PC-9 (cell line): ENCODE measurements at regions of chr2 and their contacts with region 1.

Region 1: DNA sequence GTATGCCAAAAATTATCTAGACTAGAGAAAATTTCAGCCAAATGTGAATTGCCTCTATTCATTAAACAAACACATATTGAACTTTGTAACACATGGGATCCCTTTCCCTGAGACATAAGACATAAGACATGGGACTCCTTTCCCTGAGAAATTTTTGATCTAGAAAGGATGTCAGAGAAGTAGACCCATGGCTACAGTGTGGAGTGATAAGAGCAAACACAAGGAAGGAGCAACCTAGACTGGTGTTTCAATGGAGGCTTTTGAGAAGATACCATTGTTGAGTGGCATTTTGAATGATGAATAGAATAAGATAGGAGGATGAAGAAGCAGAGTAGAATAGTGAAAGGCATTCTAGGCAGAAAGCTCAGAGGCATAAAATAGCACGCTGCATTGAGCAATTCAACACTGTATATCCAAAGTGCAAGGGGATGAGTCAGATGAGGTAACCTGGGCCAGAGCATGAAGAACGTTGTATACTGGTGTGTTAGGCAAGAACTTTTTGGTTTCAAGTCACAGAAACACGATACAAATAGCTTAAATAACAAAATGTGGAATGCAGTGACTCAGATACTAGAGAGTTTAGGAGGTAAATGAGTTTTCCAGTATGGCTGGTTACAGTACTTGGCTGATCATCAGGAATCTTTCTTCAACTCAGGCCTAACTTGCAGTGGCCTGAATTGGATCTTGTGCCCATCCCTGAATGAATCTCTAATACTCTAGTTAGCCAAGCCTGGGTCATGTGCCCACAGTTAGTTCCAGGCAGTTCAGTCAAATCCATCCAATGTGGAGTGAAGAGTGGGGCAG is 129.8 kb upstream of the TANK start:
- DNase-seq: peak; percentile 43 to 93
- H3K4me3 ChIP-seq: no peak overlapping the region
- H3K27ac ChIP-seq: peak overlapping the region; percentile 73
- H3K4me1 ChIP-seq: peaks cover 20% of the 10 kb centered on the region
- H3K27me3 ChIP-seq: no peaks in the 10 kb centered on the region
- CTCF ChIP-seq: no peak

Region 2: DNA sequence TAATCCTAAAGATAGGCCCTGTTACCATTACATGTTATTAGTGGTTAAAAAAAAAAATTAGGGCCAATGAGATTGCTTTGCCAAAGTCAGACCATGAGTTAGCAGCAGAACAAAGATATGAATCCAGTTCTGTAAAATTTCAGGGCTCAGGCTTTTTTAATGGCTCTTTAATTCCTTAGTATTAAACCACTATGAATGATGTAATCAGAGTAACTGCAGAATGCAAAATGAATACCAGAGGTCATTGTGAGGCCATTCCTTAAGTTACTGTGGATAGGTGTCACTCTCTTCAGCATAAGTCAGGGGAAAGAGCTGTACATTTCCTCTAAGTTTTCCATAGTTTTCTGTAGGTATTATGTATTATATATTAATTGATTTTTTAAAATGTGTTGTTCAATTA is 343.5 kb after region 1 on chr2:
- CTCF ChIA-PET with region 1: no interaction called
- POLR2A ChIA-PET with region 1: interaction called, 15 read pairs
- intact Hi-C with region 1: no loop called
- DNase-seq: no peak
- H3K4me3 ChIP-seq: no peak overlapping the region
- H3K27ac ChIP-seq: peak overlapping the region; percentile 41
- H3K4me1 ChIP-seq: peaks cover 14% of the 10 kb centered on the region
- H3K27me3 ChIP-seq: no peaks in the 10 kb centered on the region
- CTCF ChIP-seq: no peak